Right ventricle myocardium inferior (tissue), 1 donor: ENCODE measurements at regions of chr3 and their contacts with region 1.

Region 1: DNA sequence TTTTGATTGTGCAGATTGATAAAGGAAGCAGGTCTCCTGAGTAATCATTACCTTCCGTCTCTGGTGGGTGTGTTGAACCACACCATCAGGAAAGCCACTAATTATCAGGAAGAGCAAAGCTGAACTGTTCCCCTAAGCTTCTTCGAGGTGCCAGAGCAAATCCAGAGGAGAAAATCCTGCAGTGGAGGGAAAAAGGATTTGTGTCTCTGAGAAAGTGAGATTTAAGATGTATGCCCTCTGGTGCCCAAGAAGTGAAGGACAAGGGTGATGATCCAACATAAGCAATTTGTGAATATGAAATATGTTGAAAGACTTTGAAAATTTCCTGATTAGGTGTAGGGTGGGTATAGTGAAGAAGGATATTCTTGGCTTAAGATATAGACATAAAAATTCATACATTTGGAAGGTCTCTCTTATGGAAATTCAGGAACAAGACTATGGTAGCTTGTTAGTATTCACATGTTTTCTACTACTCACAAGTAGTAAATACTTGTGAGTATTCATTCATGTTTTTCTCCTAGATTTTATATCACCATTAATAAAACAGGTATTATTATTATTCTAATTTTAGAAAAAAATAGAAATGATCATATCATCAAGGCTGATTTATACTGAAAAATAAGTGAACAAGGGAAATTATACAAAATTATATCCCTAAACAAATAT is 34.8 kb downstream of the COMMD2 start:
- DNase-seq: no peak
- ATAC-seq: peak; percentile 57

Region 2: DNA sequence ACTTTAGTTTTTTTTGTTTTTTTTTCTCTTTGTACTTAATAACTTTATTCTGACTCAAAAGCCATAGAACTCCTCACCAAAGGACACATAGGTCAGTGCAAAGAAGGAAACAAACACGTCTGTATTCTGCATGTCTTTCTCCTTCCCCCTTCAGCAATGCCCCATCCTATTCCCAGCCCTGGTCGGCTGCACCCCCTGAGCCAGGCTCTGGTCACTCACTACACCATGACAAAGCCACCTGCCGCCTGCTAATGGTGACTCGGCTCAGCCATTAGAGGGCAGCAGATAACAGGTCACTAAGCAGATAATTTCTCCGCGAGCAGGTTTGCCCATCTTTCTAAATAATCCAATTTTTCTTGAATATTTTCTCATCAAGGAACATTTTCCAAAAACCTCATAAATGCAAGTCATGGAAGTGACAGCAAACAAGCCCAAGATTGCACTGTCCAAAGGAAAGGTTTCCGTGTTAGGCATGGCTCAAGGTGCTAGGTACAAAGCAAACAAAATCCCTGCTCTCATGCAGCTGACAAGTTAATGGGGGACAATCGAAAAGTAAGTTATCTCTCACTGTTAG is 205.2 kb before region 1 on chr3:
- intact Hi-C with region 1: loop called (anchors 1 kb)
- DNase-seq: peak; percentile 67
- ATAC-seq: peak; percentile 75

Region 3: DNA sequence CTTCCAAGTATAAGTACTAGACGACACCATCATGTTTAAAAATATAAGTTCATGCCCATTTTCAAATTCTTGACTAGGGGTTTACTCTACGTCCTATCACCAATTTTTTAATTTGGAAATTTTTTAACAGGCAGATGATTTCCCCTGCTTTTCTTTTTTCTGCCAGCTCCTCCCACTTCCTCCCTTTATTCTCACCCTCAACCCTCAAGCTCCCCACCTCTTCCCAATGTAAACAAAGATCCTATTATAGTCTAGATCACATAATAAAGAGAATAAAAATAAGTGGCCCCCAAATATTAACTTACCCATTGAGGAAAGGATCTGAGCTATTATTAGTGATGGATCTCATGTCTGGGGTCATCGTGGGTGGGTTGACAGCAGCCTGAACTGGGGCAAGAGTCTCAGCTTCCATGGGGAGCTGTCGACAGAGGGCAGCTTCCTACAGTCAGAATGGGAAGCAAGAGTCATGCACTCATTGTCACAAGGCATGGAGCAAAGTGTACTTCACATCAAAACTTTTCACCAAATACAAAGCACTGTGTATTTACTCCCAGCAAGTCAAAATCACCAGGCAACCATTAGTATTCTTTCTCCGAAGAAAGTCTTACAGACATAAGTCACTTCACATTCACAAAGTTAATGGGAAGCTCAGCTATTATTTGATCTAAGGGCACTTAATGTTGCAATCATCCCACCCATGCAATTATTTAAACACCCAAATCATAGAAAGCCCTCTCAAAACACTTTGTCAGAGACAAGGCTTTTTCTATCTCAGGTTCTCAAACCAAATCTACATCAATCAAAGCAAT is 189.8 kb before region 1 on chr3:
- intact Hi-C with region 1: loop called (anchors 1 kb)
- DNase-seq: no peak
- ATAC-seq: peak; percentile 55

Region 4: GRCh38 chr3:149936812-149937233 is 219.3 kb after region 1 on chr3:
- intact Hi-C with region 1: no loop called
- DNase-seq: peak; percentile 50
- ATAC-seq: peak; percentile 44